Activated CD4-positive, alpha-beta T cell treated with anti-CD3 and anti-CD28 coated beads, Interleukin-2, amount 10 ng/mL, durations not matched to agents 24 days and 14 days (primary cell): ENCODE measurements at regions of chr2 and their contacts with region 1.

Region 1: DNA sequence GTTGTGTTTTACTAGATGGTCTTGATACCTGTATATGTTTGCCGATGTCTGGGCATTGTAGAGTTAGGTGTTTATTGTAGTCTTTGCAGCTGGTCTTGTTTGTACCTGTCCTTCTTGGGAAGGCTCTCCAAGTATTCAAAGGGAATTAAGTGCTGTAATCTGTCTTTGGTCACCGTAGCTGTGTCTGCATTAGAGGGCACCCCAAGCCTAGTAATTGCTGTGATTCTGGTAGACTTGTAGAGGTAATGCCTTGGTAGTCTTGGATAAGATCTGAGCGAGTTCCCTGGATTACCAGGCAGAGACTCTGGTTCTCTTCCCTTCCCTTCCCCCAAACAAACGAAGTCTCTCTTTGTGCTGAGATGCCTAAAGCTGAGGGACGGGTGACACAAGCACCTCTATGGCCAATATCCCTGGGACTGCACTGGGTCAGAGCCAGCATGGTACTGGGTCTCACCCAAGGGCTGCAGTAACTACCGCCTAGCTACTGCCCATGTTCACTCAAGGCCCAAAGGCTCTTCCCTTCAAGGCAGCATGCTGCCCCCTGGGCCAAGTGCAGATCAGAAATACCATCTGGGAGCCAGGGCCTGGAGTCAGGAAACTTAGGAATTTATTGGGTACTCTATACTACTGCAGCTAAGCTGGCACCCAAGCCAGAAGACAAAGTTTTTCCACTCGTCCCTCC is 27.1 kb downstream of the STPG4 start:
- DNase-seq: no peak
- H3K4me3 Mint-ChIP-seq: no peak overlapping the region
- H3K27ac Mint-ChIP-seq: no peak overlapping the region
- H3K4me1 Mint-ChIP-seq: no peaks in the 10 kb centered on the region
- H3K27me3 Mint-ChIP-seq: peaks cover 20% of the 10 kb centered on the region

Region 2: DNA sequence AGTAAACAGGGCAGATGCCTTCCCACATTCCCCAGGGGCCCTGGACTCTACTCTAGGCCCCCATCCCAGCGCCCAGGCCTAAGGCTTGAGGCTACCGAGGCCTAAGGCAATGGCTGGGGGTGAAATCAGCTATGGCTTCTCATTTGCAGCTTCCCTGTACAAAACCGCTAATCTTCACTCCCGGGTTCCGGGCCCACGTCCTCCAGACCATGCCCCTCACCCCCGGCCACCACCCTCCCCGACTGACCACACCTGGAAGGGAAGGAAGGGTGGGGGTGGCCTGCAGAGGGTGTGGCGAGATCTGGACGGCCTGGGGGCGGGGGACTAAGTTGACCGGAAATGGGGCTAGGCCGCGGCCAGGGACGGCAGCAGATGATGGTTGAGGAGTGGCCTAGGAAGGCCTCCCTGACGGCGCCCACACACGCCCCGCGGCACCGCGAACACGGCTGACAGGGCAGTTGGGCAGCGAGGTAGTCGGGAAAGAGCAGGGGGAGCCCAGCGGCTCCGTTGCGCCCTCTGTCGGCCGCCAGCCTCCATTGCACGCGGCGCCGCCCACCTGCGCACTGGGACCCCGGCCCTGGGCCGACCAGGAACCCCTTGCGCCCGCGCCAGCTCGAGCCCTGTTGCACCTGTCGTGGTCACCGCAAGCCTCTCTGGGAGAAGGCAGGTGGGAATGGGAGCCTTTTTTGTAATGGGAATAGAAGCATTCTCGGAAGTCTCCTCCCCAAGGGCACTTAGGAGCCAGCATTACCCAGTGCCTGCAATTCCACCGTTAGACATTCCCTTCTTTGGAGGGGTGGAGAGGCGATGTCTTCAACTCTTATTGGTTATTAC is 144.2 kb after region 1 on chr2:
- intact Hi-C with region 1: loop called (anchors 5 kb)
- DNase-seq: peak; percentile 87
- H3K4me3 Mint-ChIP-seq: peak overlapping the region; percentile 73
- H3K27ac Mint-ChIP-seq: peak overlapping the region; percentile 25
- H3K4me1 Mint-ChIP-seq: peaks cover 2% of the 10 kb centered on the region
- H3K27me3 Mint-ChIP-seq: peaks cover 6% of the 10 kb centered on the region